ENCODE measurements at regions of chr22 and their contacts with region 1.

Region 1: GRCh38 chr22:41197038-41197972 is 7.8 kb upstream of the L3MBTL2 start:
- DNase-seq: peak; percentile 75
- H3K4me3 ChIP-seq: peak overlapping the region; percentile 22 to 65 (median 31)
- H3K27ac ChIP-seq: no peak overlapping the region
- H3K4me1 ChIP-seq: peaks cover 5% of the 10 kb centered on the region
- H3K27me3 ChIP-seq: no peaks in the 10 kb centered on the region
- CTCF ChIP-seq: peak in 1 of 2 donors; percentile 10
- POLR2A ChIP-seq: no peak

Region 2: DNA sequence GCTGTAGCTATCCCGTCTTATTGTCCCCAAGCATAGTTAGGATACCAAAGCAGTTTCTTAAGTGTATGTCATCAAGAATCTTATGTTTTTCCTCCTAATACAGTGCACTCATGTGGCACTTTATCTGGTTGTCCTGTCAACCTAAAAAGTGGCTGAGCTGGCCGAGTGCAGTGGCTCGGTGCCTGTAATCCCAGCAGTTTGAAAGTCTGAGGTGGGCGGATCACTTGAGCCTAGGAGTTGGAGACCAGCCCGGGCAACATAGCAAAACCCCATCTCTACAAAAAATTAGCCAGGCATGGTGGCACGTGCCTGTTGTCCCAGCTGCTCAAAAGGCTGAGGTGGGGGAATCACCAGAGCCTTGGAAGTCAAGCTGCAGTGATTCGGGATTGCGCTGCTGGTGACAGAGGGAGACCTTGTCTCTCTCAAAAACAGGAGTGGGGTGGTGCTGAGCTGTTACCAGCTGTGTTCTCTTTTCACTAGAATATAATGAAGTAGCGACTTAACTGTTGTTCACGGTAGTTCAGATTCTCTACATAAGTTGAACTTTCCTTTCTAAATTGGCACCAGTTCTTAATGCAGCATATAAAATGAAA is 56.8 kb before region 1 on chr22:
- CTCF ChIA-PET with region 1: no interaction called
- POLR2A ChIA-PET with region 1: no interaction called
- dilution Hi-C with region 1: no loop called
- intact Hi-C with region 1: no loop called
- DNase-seq: no peak
- H3K4me3 ChIP-seq: no peak overlapping the region
- H3K27ac ChIP-seq: no peak overlapping the region
- H3K4me1 ChIP-seq: no peaks in the 10 kb centered on the region
- H3K27me3 ChIP-seq: no peaks in the 10 kb centered on the region
- CTCF ChIP-seq: no peak
- POLR2A ChIP-seq: no peak

Region 3: DNA sequence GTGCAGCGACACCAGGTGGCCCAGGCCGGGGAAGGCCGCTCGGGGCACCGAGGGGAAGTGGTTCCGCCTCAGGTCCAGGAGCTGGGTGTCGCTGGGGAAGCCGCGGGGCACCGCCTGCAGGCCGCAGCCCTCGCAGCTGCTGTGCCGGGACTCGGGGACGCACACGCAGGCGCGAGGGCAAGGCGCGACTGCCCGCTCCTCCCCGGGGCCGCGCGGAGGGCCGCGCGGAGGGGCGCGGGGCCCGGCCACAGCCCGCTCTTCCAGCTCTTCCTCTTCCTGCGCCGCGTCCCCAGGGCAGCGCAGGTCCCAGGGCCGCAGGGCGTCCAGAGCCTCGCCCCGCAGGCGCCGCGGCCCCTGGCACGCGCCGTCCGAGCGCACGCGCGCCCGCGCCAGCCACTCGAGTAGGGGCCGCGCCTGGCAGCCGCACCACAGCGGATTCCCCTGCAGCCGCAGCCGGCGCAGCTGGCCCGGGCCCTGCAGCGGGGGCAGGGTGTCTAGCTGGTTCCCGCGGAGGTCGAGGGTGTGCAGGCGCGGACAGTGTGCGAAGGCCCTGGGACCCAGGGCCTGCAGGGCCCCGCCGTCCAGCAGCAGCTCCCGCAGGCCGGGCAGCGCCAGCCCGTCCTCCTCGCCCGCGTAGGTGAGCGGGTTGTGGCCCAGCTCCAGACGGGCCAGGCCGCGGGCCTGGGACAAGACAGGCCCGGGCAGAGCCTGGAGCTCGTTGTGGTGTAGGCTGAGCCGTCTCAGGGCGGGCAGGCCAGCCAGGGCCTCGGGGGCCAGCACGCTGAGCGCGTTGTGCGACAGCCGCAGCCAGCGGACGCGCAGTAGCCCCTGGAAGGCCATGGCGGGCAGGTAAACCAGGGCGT is 40.6 kb after region 1 on chr22:
- CTCF ChIA-PET with region 1: interaction called, 23 read pairs
- POLR2A ChIA-PET with region 1: interaction called, 3 read pairs
- dilution Hi-C with region 1: no loop called
- intact Hi-C with region 1: no loop called
- DNase-seq: peak; percentile 31
- H3K4me3 ChIP-seq: peak overlapping the region in 1 of 3 experiments; percentile 5
- H3K27ac ChIP-seq: no peak overlapping the region
- H3K4me1 ChIP-seq: peaks cover 6% of the 10 kb centered on the region
- H3K27me3 ChIP-seq: no peaks in the 10 kb centered on the region
- CTCF ChIP-seq: peak; percentile 28 to 58
- POLR2A ChIP-seq: peak; percentile 56